ENCODE measurements at regions of chr1 and their contacts with region 1.

Region 1: DNA sequence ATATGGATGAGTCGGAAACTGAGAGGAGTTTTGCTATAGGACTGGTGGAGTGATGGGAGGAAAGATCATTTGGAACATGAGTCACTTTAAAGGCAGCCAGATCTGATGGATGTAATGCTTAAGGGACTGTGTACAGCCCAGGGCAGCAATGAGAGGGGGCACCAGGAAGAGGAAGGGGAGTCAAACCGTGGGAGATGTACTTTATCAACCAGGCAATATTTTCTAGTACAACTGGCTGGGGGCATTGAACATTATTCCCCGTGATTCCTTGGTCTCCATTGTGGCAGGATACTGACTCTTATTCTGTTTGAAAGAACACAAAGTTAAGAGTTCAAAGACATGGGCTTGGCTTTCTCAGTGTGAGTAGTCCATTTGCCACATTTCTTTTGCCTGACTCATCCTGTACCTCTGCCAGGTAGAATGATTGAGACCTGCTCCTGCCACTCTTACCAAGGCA is 268.2 kb upstream of the NR5A2 start:
- DNase-seq: peak; percentile 88
- H3K4me3 ChIP-seq: peak overlapping the region in 2 of 3 experiments; percentile 8 to 36
- H3K27ac ChIP-seq: peak overlapping the region; percentile 92
- H3K4me1 ChIP-seq: peaks cover 25% of the 10 kb centered on the region
- H3K27me3 ChIP-seq: no peaks in the 10 kb centered on the region
- CTCF ChIP-seq: no peak

Region 2: DNA sequence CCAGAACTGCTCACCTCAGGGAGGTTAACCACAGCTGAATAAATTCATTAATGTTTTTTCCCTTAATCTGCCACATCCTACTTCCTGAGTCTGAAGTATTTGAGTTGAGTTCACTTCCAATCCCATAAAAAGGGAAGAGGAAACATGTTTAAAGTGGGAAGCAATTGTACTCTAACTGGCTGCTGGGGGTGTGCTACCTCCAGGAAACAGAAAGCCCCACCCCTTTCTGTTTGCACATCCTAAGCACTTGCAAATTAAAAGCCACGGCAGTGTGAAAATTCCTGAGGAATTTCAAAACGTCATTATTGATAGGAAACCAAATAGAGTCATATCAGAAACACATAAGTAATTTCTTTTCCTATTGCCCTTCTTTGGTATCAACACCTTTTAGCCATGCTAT is 38.8 kb before region 1 on chr1:
- CTCF ChIA-PET with region 1: no interaction called
- dilution Hi-C with region 1: no loop called
- in situ Hi-C with region 1: no loop called
- intact Hi-C with region 1: loop called (anchors 2 kb)
- DNase-seq: no peak
- H3K4me3 ChIP-seq: no peak overlapping the region
- H3K27ac ChIP-seq: no peak overlapping the region
- H3K4me1 ChIP-seq: no peaks in the 10 kb centered on the region
- H3K27me3 ChIP-seq: no peaks in the 10 kb centered on the region
- CTCF ChIP-seq: no peak

Region 3: GRCh38 chr1:199742547-199742946 is 16.7 kb before region 1 on chr1:
- CTCF ChIA-PET with region 1: no interaction called
- dilution Hi-C with region 1: no loop called
- in situ Hi-C with region 1: no loop called
- intact Hi-C with region 1: loop called (anchors 2 kb)
- DNase-seq: peak; percentile 89
- H3K4me3 ChIP-seq: no peak overlapping the region
- H3K27ac ChIP-seq: peak overlapping the region; percentile 84
- H3K4me1 ChIP-seq: peaks cover 20% of the 10 kb centered on the region
- H3K27me3 ChIP-seq: no peaks in the 10 kb centered on the region
- CTCF ChIP-seq: no peak

Region 4: DNA sequence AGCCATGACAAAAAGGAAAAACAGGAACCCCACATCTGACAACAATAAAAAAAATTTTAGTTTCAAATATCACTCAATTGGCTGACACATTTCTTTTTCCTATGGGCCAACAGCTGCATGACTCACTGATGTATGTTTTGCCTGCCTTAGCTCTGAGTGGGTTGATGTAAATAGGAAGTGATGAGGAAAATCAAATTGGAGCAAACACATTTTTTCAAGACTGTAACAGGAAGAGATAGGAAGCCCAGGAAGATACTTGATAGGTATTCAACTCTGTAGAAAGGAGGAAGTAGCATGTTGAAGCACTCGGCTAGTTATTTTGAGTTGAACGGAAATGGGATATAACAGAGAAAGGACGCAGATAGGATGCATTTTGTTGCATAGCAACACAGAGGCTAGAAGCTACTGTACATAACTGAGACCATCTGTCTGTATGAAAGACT is 100.2 kb after region 1 on chr1:
- CTCF ChIA-PET with region 1: no interaction called
- dilution Hi-C with region 1: no loop called
- in situ Hi-C with region 1: no loop called
- intact Hi-C with region 1: loop called (anchors 1 kb)
- DNase-seq: peak; percentile 67
- H3K4me3 ChIP-seq: no peak overlapping the region
- H3K27ac ChIP-seq: peak overlapping the region; percentile 68
- H3K4me1 ChIP-seq: peaks cover 43% of the 10 kb centered on the region
- H3K27me3 ChIP-seq: no peaks in the 10 kb centered on the region
- CTCF ChIP-seq: no peak

Measured in mammary epithelial cell (primary cell).